ENCODE measurements at regions of chr15 and their contacts with region 1.

Region 1: DNA sequence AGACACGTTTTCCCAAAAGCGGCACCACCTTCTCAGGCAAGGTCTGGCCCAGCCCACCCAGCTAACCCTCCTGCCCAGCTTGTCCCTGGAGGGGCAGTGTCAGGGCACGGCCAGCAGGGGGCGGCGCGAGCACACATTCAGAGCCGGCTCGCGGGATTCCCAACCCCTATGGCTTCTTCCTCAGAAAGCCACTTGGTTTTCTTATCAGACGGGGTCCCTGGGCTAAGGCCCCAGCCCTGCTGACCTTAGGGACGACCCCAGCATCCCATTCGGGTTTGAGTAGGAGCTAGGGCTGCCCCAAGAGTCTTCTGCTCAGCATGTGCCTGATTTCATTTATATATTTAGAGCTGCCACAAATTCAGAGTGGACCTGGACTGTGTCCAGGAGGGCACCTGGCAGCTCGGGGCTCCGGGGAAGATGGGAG is 14.5 kb downstream of the RLBP1 start:
- DNase-seq: peak; percentile 74 to 82 (median 76)
- ATAC-seq: peak; percentile 91 to 98 (median 94)
- H3K4me3 ChIP-seq: peak overlapping the region in 1 of 3 donors; percentile 17
- H3K27ac ChIP-seq: no peak overlapping the region
- H3K4me1 ChIP-seq: peaks cover 0 to 4% (median 0%) of the 10 kb centered on the region in 4 donors
- H3K27me3 ChIP-seq: no peaks in the 10 kb centered on the region
- CTCF ChIP-seq: peak; percentile 88 to 98 (median 98)
- POLR2A ChIP-seq: no peak

Region 2: DNA sequence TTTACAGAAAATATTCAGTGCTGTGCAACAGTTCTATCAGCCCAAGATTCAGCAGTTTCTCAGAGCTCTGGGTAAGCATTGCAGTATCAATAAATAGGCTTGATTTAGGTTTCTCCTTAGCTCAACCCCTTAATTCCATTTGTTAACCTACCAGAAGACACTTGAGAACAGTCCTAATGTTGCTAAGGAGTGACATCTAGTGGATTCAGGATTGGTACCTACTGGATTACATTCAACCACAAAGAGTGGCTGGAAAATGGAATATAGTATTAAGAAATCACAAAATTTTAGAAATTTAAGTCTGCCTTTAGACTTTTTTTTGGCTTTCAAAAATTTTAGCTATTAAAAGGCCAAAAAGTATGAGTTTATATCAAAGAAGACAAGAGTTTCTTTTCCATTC is 93.0 kb after region 1 on chr15:
- intact Hi-C with region 1: loop called in 1 of 2 experiments (anchors 5 kb)
- DNase-seq: no peak
- ATAC-seq: peak; percentile 45 to 58 (median 52)
- H3K4me3 ChIP-seq: no peak overlapping the region
- H3K27ac ChIP-seq: no peak overlapping the region
- H3K4me1 ChIP-seq: no peaks in the 10 kb centered on the region
- H3K27me3 ChIP-seq: no peaks in the 10 kb centered on the region
- CTCF ChIP-seq: peak; percentile 23 to 39 (median 30)
- POLR2A ChIP-seq: no peak